CD4-positive, alpha-beta T cell (primary cell): ENCODE measurements at regions of chr17 and their contacts with region 1.

Region 1: GRCh38 chr17:64145757-64146417 is 15.9 kb upstream of the ERN1 start:
- DNase-seq: peak; percentile 91 to 99 (median 95)
- ATAC-seq: peak; percentile 88
- H3K4me3 ChIP-seq: peak overlapping the region; percentile 78
- H3K4me3 Mint-ChIP-seq: no peak overlapping the region
- H3K27ac ChIP-seq: peak overlapping the region; percentile 73 to 91
- H3K27ac Mint-ChIP-seq: no peak overlapping the region
- H3K4me1 ChIP-seq: peaks cover 21% of the 10 kb centered on the region
- H3K4me1 Mint-ChIP-seq: peaks cover 19% of the 10 kb centered on the region
- H3K27me3 ChIP-seq: no peaks in the 10 kb centered on the region
- H3K27me3 Mint-ChIP-seq: no peaks in the 10 kb centered on the region
- CTCF ChIP-seq: no peak

Region 2: GRCh38 chr17:63773381-63774140 is 372.3 kb before region 1 on chr17 and contains the start of gene CCDC47:
- CTCF ChIA-PET with region 1: no interaction called
- POLR2A ChIA-PET with region 1: interaction called, 14 read pairs
- intact Hi-C with region 1: no loop called
- DNase-seq: peak; percentile 94 to 100 (median 98)
- ATAC-seq: peak; percentile 80
- H3K4me3 ChIP-seq: peak within 1 kb of the TSS; percentile 67
- H3K4me3 Mint-ChIP-seq: peak within 1 kb of the TSS; percentile 99
- H3K27ac ChIP-seq: peak within 1 kb of the TSS; percentile 94 to 98
- H3K27ac Mint-ChIP-seq: peak within 1 kb of the TSS; percentile 97
- H3K4me1 ChIP-seq: peaks cover 58% of the 10 kb centered on the region
- H3K4me1 Mint-ChIP-seq: peaks cover 71% of the 10 kb centered on the region
- H3K27me3 ChIP-seq: no peaks in the 10 kb centered on the region
- H3K27me3 Mint-ChIP-seq: no peaks in the 10 kb centered on the region
- CTCF ChIP-seq: no peak
- total RNA-seq, gene CCDC47: 31.0 to 31.3 TPM

Region 3: DNA sequence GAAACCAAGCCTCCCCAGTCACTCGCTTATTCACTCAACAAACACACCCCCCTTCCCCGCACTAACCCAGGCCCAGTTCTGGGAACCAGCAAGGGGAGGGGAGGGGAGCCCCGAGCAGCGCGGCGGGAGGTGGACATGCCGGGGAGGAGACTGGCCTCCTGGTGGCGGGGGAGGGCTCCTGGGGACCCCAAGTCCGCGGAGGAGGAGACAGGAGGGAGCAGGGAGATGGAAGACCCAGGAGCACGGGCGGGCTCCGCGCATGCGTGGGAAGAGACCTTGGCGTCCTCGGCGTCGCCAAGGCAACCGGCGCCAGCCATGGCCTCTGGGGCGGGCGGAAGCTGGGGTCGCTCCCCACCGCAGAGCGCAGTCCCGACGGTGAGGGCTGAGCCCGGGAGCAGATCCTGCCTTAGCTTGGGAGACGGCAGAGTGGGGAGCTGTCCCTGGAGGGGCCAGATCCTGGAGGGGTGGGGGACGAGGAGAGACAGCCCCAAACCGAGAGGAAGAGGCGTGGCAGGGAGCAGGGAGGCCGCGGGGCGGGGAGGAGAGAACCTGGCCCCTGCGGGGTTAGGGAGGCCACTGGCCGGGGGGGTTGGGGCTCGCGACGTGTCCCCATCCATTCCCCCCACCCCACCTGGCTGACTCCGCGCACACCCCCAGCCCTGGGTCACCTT is 147.7 kb before region 1 on chr17 and contains the start of gene PRR29:
- CTCF ChIA-PET with region 1: no interaction called
- POLR2A ChIA-PET with region 1: interaction called, 14 read pairs
- intact Hi-C with region 1: no loop called
- DNase-seq: peak; percentile 56 to 90 (median 70)
- ATAC-seq: peak; percentile 70
- H3K4me3 ChIP-seq: peak within 1 kb of the TSS; percentile 80
- H3K4me3 Mint-ChIP-seq: peak within 1 kb of the TSS; percentile 91
- H3K27ac ChIP-seq: no peak within 1 kb of the TSS
- H3K27ac Mint-ChIP-seq: peak within 1 kb of the TSS; percentile 73
- H3K4me1 ChIP-seq: peaks cover 45% of the 10 kb centered on the region
- H3K4me1 Mint-ChIP-seq: peaks cover 58% of the 10 kb centered on the region
- H3K27me3 ChIP-seq: no peaks in the 10 kb centered on the region
- H3K27me3 Mint-ChIP-seq: no peaks in the 10 kb centered on the region
- CTCF ChIP-seq: no peak
- total RNA-seq, gene PRR29: 0.56 to 0.71 TPM

Region 4: DNA sequence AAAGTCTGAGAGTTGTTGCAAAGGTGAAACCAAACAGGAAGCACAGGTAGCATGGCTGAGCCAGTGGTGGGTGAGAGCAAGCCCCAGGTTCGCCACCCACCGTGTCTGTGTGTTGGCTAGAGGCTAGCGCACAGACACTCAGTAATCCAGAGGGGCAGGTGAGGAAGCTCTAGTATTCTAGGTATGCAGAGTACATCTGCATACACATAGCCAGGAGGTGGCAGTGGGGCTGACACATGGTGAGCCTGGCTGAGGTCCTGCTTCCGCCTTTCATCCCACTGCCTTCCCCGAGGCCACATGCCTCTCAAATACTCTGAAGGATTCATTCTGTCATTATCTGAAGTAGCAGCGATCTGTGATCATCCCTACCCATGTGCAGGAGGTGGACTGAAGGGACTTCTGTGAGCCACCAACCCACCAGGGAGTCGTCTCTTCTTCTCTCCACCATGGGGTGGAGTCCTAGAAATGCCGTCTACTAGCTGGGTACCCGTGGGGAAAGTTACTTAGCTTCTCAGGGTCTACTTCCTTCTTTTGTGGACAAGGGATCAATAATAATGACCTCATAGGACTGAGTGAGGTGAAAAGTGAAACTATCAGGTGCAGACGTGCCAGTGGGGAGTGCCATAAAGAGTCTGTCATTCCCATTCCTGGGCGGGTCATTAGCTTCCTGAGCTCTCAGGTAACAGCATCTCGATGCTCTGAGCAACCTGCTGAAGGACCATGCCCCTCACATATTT is 89.5 kb before region 1 on chr17:
- CTCF ChIA-PET with region 1: no interaction called
- POLR2A ChIA-PET with region 1: interaction called, 58 read pairs
- intact Hi-C with region 1: no loop called
- DNase-seq: peak in 1 of 14 experiments; percentile 51
- ATAC-seq: peak; percentile 45
- H3K4me3 ChIP-seq: no peak overlapping the region
- H3K4me3 Mint-ChIP-seq: no peak overlapping the region
- H3K27ac ChIP-seq: peak overlapping the region; percentile 1 to 37
- H3K27ac Mint-ChIP-seq: peak overlapping the region; percentile 57
- H3K4me1 ChIP-seq: peaks cover 73% of the 10 kb centered on the region
- H3K4me1 Mint-ChIP-seq: peaks cover 66% of the 10 kb centered on the region
- H3K27me3 ChIP-seq: no peaks in the 10 kb centered on the region
- H3K27me3 Mint-ChIP-seq: no peaks in the 10 kb centered on the region
- CTCF ChIP-seq: no peak

Region 5: GRCh38 chr17:64117981-64118979 is 27.6 kb before region 1 on chr17:
- CTCF ChIA-PET with region 1: no interaction called
- POLR2A ChIA-PET with region 1: interaction called, 14 read pairs
- intact Hi-C with region 1: no loop called
- DNase-seq: peak in 2 of 14 experiments; percentile 44 to 49
- ATAC-seq: no peak
- H3K4me3 ChIP-seq: no peak overlapping the region
- H3K4me3 Mint-ChIP-seq: no peak overlapping the region
- H3K27ac ChIP-seq: no peak overlapping the region
- H3K27ac Mint-ChIP-seq: peak overlapping the region; percentile 35
- H3K4me1 ChIP-seq: peaks cover 73% of the 10 kb centered on the region
- H3K4me1 Mint-ChIP-seq: peaks cover 67% of the 10 kb centered on the region
- H3K27me3 ChIP-seq: no peaks in the 10 kb centered on the region
- H3K27me3 Mint-ChIP-seq: no peaks in the 10 kb centered on the region
- CTCF ChIP-seq: no peak

Region 6: DNA sequence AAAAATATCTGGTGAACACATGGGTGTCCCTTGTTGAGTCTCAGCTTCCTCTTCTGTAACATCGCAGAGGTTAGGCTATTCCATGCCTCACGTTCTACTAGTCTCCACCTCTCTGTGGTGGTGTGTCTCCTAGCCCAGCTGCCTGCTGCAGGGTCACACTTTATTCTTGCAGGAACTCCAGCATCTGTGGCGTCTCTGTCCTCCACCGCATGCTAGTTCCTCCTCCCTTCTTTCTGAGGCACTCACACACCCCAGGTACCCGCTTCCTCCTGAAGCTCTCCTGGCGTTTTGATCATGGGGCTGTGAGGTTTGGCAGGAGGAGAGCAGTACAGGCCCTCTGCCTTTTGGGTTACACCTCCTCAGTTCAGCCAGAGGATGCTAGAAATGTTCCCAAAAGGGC is 127.1 kb after region 1 on chr17:
- CTCF ChIA-PET with region 1: interaction called, 3 read pairs
- POLR2A ChIA-PET with region 1: interaction called, 14 read pairs
- intact Hi-C with region 1: no loop called
- DNase-seq: peak in 1 of 14 experiments; percentile 21
- ATAC-seq: peak; percentile 61
- H3K4me3 ChIP-seq: no peak overlapping the region
- H3K4me3 Mint-ChIP-seq: no peak overlapping the region
- H3K27ac ChIP-seq: no peak overlapping the region
- H3K27ac Mint-ChIP-seq: peak overlapping the region; percentile 76
- H3K4me1 ChIP-seq: peaks cover 21% of the 10 kb centered on the region
- H3K4me1 Mint-ChIP-seq: peaks cover 31% of the 10 kb centered on the region
- H3K27me3 ChIP-seq: no peaks in the 10 kb centered on the region
- H3K27me3 Mint-ChIP-seq: no peaks in the 10 kb centered on the region
- CTCF ChIP-seq: no peak